Testis (tissue), 5 donors: ENCODE measurements at regions of chr20 and their contacts with region 1.

Region 1: GRCh38 chr20:41086402-41087338 is 50.7 kb upstream of the PLCG1 start:
- DNase-seq: no peak
- H3K4me3 ChIP-seq: no peak overlapping the region
- H3K27ac ChIP-seq: no peak overlapping the region
- H3K4me1 ChIP-seq: peaks cover 3% of the 10 kb centered on the region
- H3K27me3 ChIP-seq: no peaks in the 10 kb centered on the region
- CTCF ChIP-seq: no peak
- POLR2A ChIP-seq: no peak

Region 2: GRCh38 chr20:39516964-39517363 is 1569.7 kb before region 1 on chr20:
- intact Hi-C with region 1: loop called (anchors 10 kb)
- DNase-seq: no peak
- H3K4me3 ChIP-seq: no peak overlapping the region
- H3K27ac ChIP-seq: no peak overlapping the region
- H3K4me1 ChIP-seq: no peaks in the 10 kb centered on the region
- H3K27me3 ChIP-seq: no peaks in the 10 kb centered on the region
- CTCF ChIP-seq: no peak
- POLR2A ChIP-seq: no peak

Region 3: GRCh38 chr20:40980106-40980827 is 106.4 kb before region 1 on chr20:
- intact Hi-C with region 1: loop called (anchors 10 kb)
- DNase-seq: no peak
- H3K4me3 ChIP-seq: no peak overlapping the region
- H3K27ac ChIP-seq: no peak overlapping the region
- H3K4me1 ChIP-seq: no peaks in the 10 kb centered on the region
- H3K27me3 ChIP-seq: no peaks in the 10 kb centered on the region
- CTCF ChIP-seq: no peak
- POLR2A ChIP-seq: no peak